ENCODE measurements at regions of chr15 and their contacts with region 1.

Region 1: GRCh38 chr15:83153288-83153687 is 45.8 kb downstream of the TM6SF1 start:
- DNase-seq: no peak

Region 2: DNA sequence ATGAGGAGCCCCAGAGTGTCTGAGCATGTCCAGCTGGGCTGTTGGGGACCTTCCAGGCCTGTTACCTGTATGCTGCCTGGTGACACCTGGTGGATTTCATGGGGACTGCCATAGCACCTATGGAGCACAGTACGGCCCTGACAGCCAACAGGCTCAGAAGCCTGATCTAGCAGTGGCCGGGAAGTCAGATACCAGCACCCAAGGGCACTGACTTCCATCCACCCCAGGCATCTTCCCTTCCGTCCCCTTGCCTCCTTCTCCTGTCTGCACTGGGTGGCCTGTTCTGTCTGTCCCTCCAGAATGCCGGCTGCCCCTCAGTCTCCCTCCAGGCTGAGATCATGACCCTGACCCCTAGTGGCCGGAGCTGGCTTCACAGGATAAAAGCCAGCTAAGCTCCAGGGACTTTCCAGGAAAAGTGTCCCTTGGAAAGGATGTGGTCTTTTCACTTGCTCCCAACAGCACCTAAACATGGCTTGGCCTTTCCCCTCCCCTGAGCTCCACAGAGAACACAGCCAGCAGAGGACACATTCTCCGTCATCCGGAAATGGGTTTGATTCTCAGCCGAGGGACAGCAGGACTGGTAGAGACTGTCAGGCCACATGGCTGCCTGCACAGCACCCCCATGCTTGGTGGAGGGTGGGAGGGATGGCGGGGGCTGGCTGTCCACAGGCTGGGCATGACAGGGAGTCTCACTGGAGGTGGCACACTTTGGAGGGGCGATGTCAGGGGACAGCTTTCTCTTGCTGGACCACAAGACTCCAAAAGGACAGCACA is 622.5 kb before region 1 on chr15:
- CTCF ChIA-PET with region 1: interaction called, 10 read pairs
- POLR2A ChIA-PET with region 1: no interaction called
- DNase-seq: peak; percentile 73

Region 3: DNA sequence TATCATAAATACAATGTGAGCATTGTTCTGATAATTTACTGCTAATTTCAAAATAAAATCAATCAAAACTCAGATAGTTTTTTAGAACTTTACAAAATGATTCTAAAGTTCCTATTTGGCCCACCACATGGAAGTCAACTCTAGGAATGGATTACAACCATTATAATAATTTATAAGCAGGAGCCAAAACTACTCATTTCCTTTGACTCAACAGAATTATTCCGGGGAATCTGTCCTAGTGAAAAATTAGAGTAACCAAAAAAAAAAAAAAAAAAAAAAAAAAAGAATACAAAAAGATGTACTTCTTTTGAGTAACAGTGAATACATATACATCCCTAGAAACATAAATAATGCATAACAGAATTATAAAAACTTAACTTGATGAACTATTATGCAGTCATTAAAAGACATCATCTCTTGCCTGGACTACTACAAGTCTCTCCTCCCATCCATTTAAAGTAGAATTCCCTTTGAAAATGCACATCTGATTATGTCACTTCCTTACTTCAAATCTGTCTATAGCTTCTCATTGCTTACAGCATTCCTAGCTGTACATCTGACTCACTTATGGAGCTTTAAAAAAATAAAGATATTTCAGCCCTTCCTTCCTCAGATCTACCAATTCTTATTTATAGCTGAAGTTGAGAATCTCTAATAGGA is 11.0 kb after region 1 on chr15:
- CTCF ChIA-PET with region 1: no interaction called
- POLR2A ChIA-PET with region 1: no interaction called
- DNase-seq: no peak

Region 4: DNA sequence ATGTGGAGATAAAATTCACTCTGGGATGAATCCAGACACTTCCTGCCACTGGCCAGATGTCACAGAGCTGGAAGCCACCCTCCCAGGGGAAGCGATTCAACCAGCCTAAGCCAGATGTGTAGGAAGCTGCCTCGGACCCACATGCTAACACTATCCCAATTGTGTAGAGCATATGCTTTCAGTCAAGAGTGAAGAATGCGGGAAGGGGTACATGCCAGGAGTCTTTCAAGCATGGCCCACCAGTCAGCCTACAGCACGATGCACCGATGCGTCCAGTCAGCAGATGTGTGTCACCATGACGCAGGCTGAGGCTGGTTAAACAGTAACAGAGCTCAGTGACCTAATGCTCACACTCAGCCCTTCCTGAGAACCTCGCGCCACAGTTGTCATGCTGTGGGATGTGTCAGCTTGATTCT is 170.0 kb after region 1 on chr15:
- CTCF ChIA-PET with region 1: no interaction called
- POLR2A ChIA-PET with region 1: no interaction called
- DNase-seq: no peak